GM23248 (cell line): ENCODE measurements at regions of chr2 and their contacts with region 1.

Region 1: GRCh38 chr2:109715313-109715805 is 78.7 kb upstream of the RGPD5 start:
- DNase-seq: peak; percentile 56
- H3K4me3 ChIP-seq: no peak overlapping the region
- H3K27ac ChIP-seq: no peak overlapping the region
- H3K4me1 ChIP-seq: no peaks in the 10 kb centered on the region
- H3K27me3 ChIP-seq: no peaks in the 10 kb centered on the region

Region 2: DNA sequence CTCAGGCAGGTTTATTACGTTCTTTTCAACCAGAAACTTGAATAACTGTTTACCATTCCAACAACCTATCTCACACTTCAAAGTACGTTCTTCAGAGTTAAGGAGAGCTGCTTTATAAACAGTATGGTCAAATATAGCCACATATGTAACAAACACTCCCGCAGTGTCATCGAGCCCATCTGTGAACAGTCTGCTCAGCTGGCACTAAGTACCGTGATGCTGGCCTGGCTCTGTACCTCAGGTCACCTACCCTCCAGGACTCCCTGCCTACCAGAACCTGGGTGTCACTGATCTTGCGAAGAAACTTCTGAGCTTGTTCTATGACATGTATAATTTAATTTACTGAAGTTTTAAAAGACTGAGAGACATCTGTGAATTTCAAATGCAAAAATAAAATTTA is 173.0 kb before region 1 on chr2:
- in situ Hi-C with region 1: loop called (anchors 5 kb)
- DNase-seq: no peak
- H3K4me3 ChIP-seq: no peak overlapping the region
- H3K27ac ChIP-seq: no peak overlapping the region
- H3K4me1 ChIP-seq: peaks cover 6% of the 10 kb centered on the region
- H3K27me3 ChIP-seq: no peaks in the 10 kb centered on the region